ENCODE measurements at regions of chr1 and their contacts with region 1.

Region 1: DNA sequence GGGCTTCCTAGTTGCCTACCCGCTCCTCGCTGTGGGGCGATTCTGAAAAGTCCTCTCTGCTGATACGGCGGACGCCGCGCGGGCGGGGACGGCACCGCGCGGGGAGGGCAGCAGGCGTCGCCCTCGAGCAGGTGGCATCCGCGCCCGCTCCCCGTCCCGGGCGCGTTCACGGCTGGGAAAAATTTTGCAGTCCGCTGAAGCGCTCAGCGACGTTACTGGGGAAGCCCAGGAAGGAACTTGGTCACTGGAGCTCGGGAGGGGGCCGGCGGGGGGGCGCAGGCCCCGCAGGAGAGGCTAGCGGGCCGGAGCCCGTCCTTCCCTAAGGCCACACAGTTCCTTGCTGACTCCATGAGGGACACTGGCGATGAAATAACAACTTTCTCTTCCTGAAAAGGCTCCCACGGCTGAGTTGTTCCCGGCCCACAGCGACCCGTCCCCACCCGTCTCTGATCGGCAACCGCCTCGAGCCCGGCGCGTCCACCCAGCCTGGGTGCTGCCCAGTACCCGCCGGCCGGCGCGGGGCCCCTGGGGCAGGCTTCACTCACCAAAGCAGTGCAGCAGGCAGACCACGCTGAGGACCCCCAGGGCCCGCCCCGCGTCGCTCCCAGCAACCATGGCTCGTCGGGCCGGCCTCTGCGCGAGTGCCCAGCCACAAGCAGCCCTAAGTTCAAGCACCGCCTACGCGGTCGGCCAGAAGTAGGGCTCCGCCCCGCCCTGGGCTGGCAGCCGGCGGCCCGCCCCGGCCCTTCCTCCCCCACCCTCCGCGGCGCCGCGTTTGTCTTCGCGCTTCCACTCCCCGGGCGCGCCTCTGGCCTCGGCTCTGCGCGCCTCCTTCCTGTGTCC is at the start of gene CD58:
- DNase-seq: peak; percentile 91
- ATAC-seq: peak; percentile 83
- H3K4me3 ChIP-seq: peak within 1 kb of the TSS; percentile 92
- H3K27ac ChIP-seq: peak within 1 kb of the TSS; percentile 91
- H3K4me1 ChIP-seq: peaks cover 55% of the 10 kb centered on the region
- H3K27me3 ChIP-seq: no peaks in the 10 kb centered on the region
- CTCF ChIP-seq: peak; percentile 67
- total RNA-seq, gene CD58: 15.2 and 26.9 TPM in 2 replicates

Region 2: GRCh38 chr1:116286541-116286971 is 284.0 kb before region 1 on chr1:
- CTCF ChIA-PET with region 1: no interaction called
- POLR2A ChIA-PET with region 1: no interaction called
- intact Hi-C with region 1: no loop called
- DNase-seq: peak; percentile 42
- ATAC-seq: no peak
- H3K4me3 ChIP-seq: no peak overlapping the region
- H3K27ac ChIP-seq: no peak overlapping the region
- H3K4me1 ChIP-seq: peaks cover 30% of the 10 kb centered on the region
- H3K27me3 ChIP-seq: no peaks in the 10 kb centered on the region
- CTCF ChIP-seq: no peak

Region 3: DNA sequence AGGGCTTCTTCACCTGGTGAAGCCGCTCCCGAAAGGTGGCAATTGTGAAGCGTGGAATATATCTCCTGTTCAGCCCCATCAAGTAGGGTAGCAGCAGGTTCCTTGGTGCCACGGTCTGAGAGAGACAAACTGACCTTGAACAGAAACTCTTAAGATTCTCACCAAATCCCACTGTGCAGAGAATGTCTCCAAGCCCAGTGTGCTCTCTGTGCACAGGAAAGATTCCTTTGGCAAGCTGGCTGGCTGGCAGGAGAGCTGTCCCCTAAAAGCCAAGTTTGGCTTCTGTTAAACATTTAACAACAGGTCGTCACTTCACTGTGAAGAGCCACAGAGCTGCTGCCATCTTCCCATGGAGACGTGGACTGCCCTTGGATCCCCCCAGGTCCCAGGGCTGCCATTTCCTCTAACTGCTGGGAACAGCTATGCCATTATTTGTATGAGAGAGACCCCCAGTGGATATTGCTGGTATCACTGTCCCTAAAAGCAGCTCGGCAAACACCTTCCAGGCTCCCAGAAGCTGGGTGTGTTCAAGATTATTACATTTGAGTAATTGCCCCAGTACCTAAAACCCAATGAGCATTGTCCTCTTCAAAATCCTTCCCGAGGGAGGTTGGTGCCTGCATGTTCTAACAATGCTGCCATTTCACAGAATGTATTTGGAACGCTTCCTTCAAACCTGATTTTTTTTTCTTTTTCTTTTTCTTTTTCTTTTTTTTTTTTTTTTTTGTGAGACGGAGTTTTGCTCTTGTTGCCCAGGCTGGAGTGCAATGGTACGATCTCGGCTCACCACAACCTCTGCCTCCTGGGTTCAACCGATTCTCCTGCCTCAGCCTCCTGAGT is 71.6 kb before region 1 on chr1:
- CTCF ChIA-PET with region 1: interaction called, 9 read pairs
- POLR2A ChIA-PET with region 1: no interaction called
- intact Hi-C with region 1: loop called (anchors 2 kb)
- DNase-seq: peak; percentile 78
- ATAC-seq: peak; percentile 94
- H3K4me3 ChIP-seq: no peak overlapping the region
- H3K27ac ChIP-seq: no peak overlapping the region
- H3K4me1 ChIP-seq: peaks cover 18% of the 10 kb centered on the region
- H3K27me3 ChIP-seq: no peaks in the 10 kb centered on the region
- CTCF ChIP-seq: peak; percentile 92

Region 4: DNA sequence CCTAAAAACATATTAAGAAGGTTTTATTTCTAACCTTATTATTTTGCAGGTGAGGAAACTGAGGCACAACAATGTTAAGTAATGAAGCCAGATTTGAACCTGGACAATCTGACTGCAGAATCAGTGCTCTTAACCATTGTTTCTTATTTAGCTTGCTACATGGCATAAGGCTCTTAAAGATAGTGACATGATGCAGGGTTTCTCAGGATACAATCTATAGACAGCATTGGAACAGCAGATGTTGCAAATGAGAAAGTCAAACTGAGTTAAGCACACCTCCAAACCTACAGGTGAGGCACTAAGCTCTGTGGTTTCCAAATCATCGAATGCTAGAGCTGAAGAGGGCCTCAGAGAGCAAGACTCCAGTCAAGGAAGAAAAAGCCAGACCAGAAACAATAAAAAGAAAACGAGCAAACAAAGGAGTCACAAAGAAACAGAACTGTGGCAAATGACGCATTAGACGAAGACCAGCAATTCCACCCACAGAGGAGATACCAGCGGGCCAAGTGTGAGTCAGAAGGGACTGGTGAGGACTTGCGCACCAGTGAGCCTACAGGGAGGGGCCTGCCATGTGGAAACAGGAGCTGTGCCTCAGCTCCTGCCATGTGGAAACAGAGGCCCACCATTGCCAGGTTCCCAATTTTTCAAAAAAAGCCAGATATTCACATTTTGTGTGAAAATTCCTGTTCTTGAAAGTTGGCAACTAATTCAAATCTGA is 14.1 kb before region 1 on chr1:
- CTCF ChIA-PET with region 1: interaction called, 5 read pairs
- POLR2A ChIA-PET with region 1: no interaction called
- intact Hi-C with region 1: loop called (anchors 2 kb)
- DNase-seq: peak; percentile 98
- ATAC-seq: peak; percentile 99
- H3K4me3 ChIP-seq: no peak overlapping the region
- H3K27ac ChIP-seq: peak overlapping the region; percentile 94
- H3K4me1 ChIP-seq: peaks cover 34% of the 10 kb centered on the region
- H3K27me3 ChIP-seq: no peaks in the 10 kb centered on the region
- CTCF ChIP-seq: peak; percentile 50

Region 5: DNA sequence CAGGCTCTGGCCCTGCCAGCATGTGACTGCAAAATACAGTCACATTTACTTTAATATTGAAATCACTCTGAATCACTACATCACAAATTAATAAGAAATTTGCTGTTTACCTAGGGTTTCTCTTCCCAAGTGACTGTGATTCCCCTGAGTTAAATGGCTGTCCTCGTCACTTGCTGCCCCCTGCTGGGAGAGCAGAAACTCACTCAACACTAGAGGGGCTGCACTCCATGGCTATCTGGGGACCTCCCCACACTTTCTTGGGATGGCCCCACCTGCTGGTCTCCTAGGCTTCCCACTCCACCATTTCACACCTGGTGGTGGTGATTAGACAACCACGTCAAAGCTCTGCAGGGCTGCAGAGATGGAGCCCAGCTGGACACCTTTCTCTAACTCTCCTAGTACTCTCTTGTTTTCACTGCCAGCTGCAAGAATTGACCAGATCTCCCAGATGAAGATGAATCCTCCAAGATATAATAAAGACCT is 247.0 kb after region 1 on chr1:
- CTCF ChIA-PET with region 1: no interaction called
- POLR2A ChIA-PET with region 1: no interaction called
- intact Hi-C with region 1: loop called (anchors 5 kb)
- DNase-seq: peak; percentile 79
- ATAC-seq: peak; percentile 93
- H3K4me3 ChIP-seq: no peak overlapping the region
- H3K27ac ChIP-seq: no peak overlapping the region
- H3K4me1 ChIP-seq: 0 out of 2 replicates have a peak, but pooled peaks cover 10% of the 10 kb centered on the region
- H3K27me3 ChIP-seq: no peaks in the 10 kb centered on the region
- CTCF ChIP-seq: peak; percentile 97

Region 6: DNA sequence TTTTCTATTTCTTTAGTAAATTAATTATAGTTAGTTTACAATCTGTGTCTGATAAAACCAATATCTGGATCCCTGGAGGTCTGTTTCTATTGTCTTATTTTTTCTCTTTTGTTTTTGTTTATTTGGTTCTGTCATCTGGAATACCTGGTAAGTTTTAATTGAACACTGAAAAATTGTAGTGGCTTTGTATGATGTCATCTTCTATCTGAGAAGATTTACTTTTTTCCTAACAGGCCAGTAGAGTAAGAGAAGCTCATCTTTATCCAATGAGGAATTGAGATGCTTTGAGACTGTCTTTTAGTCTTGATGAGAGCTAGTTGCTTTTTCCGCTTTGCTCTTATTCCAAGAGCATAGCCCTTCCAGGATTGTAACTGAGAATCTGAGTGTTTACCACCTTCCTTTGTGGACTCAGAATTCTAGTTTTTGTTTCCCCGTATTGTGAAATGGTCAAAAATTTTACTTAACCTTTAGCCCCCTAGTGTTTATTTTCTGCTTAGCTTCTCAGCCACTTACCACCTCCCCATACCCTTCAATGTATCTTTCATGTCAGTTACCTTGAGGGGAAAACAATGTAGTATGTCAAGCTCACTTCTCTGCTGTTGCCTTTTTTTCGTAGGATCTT is 364.1 kb after region 1 on chr1:
- CTCF ChIA-PET with region 1: no interaction called
- POLR2A ChIA-PET with region 1: no interaction called
- intact Hi-C with region 1: loop called (anchors 10 kb)
- DNase-seq: peak; percentile 31
- ATAC-seq: no peak
- H3K4me3 ChIP-seq: no peak overlapping the region
- H3K27ac ChIP-seq: no peak overlapping the region
- H3K4me1 ChIP-seq: no peaks in the 10 kb centered on the region; the same call in 1 of the 2 replicates
- H3K27me3 ChIP-seq: no peaks in the 10 kb centered on the region
- CTCF ChIP-seq: peak; percentile 62